ENCODE measurements at regions of chr1 and their contacts with region 1.

Region 1: GRCh38 chr1:211680752-211681327 is 5.4 kb upstream of the NEK2 start:
- DNase-seq: peak; percentile 77
- H3K4me3 Mint-ChIP-seq: no peak overlapping the region
- H3K27ac Mint-ChIP-seq: peak overlapping the region; percentile 73
- H3K4me1 Mint-ChIP-seq: peaks cover 21% of the 10 kb centered on the region
- H3K27me3 Mint-ChIP-seq: no peaks in the 10 kb centered on the region

Region 2: DNA sequence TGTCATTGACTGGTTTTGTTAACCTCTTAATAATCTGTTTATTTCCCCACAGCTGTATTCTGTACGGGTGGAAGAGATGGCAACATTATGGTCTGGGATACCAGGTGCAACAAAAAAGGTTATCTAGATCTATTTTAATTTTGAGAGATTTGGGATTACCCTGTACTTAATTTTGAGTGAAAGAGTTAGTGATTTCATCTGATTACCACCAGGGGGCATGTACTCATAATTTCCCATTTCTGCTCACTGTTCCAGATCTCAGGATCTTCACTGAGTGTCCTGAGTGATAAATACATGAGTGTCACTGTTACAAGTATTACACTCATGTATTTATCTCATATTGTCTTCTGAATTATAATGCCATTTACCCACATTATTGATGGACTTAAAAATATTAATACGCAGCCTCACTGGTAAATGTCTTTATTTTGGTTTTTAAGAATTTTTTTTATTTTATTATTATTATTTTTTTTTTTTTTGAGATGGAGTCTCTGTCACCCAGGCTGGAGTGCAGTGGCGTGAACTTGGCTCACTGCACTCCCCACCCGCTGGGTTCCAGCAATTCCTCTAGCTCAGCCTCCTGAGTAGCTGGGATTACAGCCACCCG is 382.1 kb after region 1 on chr1:
- CTCF ChIA-PET with region 1: interaction called, 16 read pairs
- DNase-seq: no peak
- H3K4me3 Mint-ChIP-seq: no peak overlapping the region
- H3K27ac Mint-ChIP-seq: no peak overlapping the region
- H3K4me1 Mint-ChIP-seq: no peaks in the 10 kb centered on the region
- H3K27me3 Mint-ChIP-seq: no peaks in the 10 kb centered on the region

Region 3: DNA sequence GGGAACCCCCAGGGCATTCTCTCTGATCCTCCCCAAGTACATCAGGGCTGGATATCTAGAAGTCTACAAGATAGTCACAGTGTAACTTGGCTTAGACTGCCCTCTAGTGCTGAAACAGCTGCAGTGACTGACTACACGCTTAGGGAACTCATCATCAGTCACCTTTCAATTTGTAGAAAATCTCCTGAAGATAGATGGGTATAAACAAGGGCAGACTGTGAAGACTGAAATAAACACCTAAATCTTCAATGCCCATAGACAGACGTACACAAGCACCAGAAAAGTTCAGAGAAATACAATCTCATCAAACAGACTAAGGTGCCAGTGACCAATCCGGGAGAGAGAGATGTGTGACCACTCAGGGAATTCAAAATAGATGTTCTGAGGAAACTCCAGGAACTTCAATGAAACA is 687.2 kb after region 1 on chr1:
- CTCF ChIA-PET with region 1: interaction called, 13 read pairs
- DNase-seq: peak; percentile 71
- H3K4me3 Mint-ChIP-seq: no peak overlapping the region
- H3K27ac Mint-ChIP-seq: no peak overlapping the region
- H3K4me1 Mint-ChIP-seq: no peaks in the 10 kb centered on the region
- H3K27me3 Mint-ChIP-seq: no peaks in the 10 kb centered on the region